ENCODE measurements at regions of chr1 and their contacts with region 1.

Region 1: GRCh38 chr1:32926562-32926961 is 25.4 kb upstream of the TMEM54 start:
- DNase-seq: no peak
- H3K4me3 Mint-ChIP-seq: no peak overlapping the region
- H3K27ac Mint-ChIP-seq: no peak overlapping the region
- H3K4me1 Mint-ChIP-seq: peaks cover 15% of the 10 kb centered on the region
- H3K27me3 Mint-ChIP-seq: peaks cover 62% of the 10 kb centered on the region

Region 2: DNA sequence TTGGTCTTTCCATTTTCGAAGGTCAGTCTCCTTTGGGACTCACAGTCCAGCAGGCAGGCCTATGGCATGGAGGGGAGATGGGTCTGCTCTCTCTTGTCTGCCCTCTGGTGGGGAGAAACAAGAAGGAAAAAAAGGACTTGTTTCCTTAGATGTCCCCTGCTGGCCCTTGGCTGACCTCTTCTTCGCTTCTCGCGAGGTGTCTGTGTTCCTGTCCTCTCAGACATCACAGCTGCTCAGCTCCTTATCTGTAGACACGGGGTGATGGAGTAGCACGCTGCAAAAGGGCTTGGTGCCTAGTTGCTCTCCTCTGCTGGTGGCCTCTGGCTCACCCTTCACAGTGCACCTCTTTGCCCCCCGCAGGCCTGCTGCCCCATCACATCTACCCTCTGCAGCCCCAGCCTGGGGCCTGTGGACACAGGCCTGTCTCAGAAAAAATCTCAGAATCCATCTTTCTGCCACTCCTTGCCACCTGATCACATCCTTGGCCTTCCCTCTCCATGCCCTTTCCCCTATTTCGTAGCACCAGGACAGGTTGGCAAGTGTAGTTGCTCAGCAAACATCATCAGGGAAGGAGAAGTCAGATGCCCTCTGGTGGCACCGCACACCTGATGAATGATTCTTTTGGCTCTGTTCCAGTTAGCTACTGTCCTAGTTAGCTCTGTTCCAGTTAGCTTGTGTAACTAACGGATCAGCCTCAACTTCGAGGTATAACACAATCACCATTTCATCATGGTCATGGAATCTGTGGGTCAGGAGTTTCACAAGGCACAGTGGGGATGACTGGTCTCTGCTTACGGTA is 128.8 kb after region 1 on chr1:
- CTCF ChIA-PET with region 1: interaction called, 84 read pairs
- DNase-seq: peak; percentile 37
- H3K4me3 Mint-ChIP-seq: no peak overlapping the region
- H3K27ac Mint-ChIP-seq: no peak overlapping the region
- H3K4me1 Mint-ChIP-seq: peaks cover 4% of the 10 kb centered on the region
- H3K27me3 Mint-ChIP-seq: peaks cover 10% of the 10 kb centered on the region

Measured in activated naive CD4-positive, alpha-beta T cell treated with anti-CD3 and anti-CD28 coated beads, Interleukin-2, amount 10 ng/mL, durations not matched to agents 7 days and 5 days (primary cell).